ENCODE measurements at regions of chr11 and their contacts with region 1.

Region 1: GRCh38 chr11:34512840-34513681 is 533 bp downstream of the ELF5 start:
- DNase-seq: peak; percentile 74 to 81
- ATAC-seq: peak; percentile 92 to 99
- H3K4me3 ChIP-seq: no peak overlapping the region
- H3K27ac ChIP-seq: peak overlapping the region in 1 of 2 experiments; percentile 52; a peak in 3 of 6 replicates
- H3K4me1 ChIP-seq: no peaks in the 10 kb centered on the region
- CTCF ChIP-seq: peak; percentile 69
- EP300 ChIP-seq: no peak
- POLR2A ChIP-seq: no peak
- RAD21 ChIP-seq: peak; percentile 71 to 74

Region 2: GRCh38 chr11:34492806-34493414 is 20.2 kb before region 1 on chr11:
- CTCF ChIA-PET with region 1: interaction called, 89 read pairs
- POLR2A ChIA-PET with region 1: no interaction called
- DNase-seq: peak; percentile 66 to 75
- ATAC-seq: peak; percentile 51 to 81; a peak in 3 of 6 replicates
- H3K4me3 ChIP-seq: no peak overlapping the region
- H3K27ac ChIP-seq: peak overlapping the region in 1 of 2 experiments; percentile 47; a peak in 3 of 6 replicates
- H3K4me1 ChIP-seq: no peaks in the 10 kb centered on the region
- CTCF ChIP-seq: peak; percentile 90
- EP300 ChIP-seq: no peak
- POLR2A ChIP-seq: no peak
- RAD21 ChIP-seq: peak; percentile 90

Region 3: GRCh38 chr11:34525887-34526636 is 13.0 kb after region 1 on chr11:
- CTCF ChIA-PET with region 1: interaction called, 47 read pairs
- POLR2A ChIA-PET with region 1: no interaction called
- DNase-seq: no peak
- ATAC-seq: no peak
- H3K4me3 ChIP-seq: no peak overlapping the region
- H3K27ac ChIP-seq: no peak overlapping the region
- H3K4me1 ChIP-seq: 0 out of 3 replicates have a peak, but pooled peaks cover 6% of the 10 kb centered on the region
- CTCF ChIP-seq: no peak
- EP300 ChIP-seq: no peak
- POLR2A ChIP-seq: no peak
- RAD21 ChIP-seq: no peak

Region 4: GRCh38 chr11:34565417-34566207 is 52.6 kb after region 1 on chr11:
- CTCF ChIA-PET with region 1: interaction called, 10 read pairs
- POLR2A ChIA-PET with region 1: no interaction called
- DNase-seq: peak; percentile 14 to 37
- ATAC-seq: peak in 1 of 2 experiments; percentile 80; a peak in 3 of 6 replicates
- H3K4me3 ChIP-seq: no peak overlapping the region
- H3K27ac ChIP-seq: peak overlapping the region in 1 of 2 experiments; percentile 26; a peak in 1 of 6 replicates
- H3K4me1 ChIP-seq: peaks cover 11% of the 10 kb centered on the region
- CTCF ChIP-seq: peak; percentile 48
- EP300 ChIP-seq: no peak
- POLR2A ChIP-seq: no peak
- RAD21 ChIP-seq: peak; percentile 53 to 75

Region 5: DNA sequence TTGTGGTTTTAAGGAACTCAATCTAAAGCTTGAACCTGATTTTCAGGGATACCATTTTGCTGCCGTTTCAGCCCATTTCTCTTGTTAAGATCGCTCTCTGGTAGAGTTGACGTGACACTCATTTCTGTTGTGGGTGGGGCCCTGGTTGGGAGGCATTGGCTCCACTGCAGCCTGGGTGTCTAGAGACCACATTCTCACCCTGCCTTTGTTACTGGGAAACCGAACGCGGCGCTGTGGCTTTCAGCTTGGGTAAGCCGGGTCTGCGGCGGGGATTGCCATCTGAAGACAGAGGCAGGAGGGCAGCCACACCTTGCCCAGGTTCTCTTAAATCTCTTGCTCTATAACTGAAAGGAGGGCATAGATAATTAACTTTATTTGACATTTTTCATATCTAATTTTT is 111.0 kb after region 1 on chr11:
- CTCF ChIA-PET with region 1: no interaction called
- POLR2A ChIA-PET with region 1: no interaction called
- DNase-seq: no peak
- ATAC-seq: no peak
- H3K4me3 ChIP-seq: no peak overlapping the region
- H3K27ac ChIP-seq: peak overlapping the region in 1 of 2 experiments; percentile 68; a peak in 3 of 6 replicates
- H3K4me1 ChIP-seq: peaks cover 8% of the 10 kb centered on the region
- CTCF ChIP-seq: no peak
- EP300 ChIP-seq: no peak
- POLR2A ChIP-seq: no peak
- RAD21 ChIP-seq: no peak

Region 6: DNA sequence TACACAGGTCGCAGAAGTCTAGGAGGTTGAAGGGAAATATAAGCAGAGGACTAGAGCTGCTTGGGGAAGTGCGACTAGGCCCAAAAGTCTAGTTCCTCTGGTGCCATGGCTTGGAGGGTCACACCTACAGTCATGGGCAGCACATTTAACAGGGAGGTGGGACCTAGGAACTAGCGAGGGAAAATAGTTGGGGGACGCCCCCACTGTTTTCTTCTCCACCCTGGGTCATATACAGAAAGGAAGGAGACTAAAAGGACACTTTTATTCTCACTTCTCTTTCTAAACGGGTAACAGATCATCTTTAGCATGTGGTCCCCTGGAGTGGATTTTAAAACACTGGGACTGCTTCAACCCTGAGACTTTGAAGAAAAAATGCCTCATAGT is 386.6 kb after region 1 on chr11:
- CTCF ChIA-PET with region 1: interaction called, 14 read pairs
- POLR2A ChIA-PET with region 1: no interaction called
- DNase-seq: peak in 1 of 2 experiments; percentile 27
- ATAC-seq: no peak
- H3K4me3 ChIP-seq: no peak overlapping the region
- H3K27ac ChIP-seq: no peak overlapping the region
- H3K4me1 ChIP-seq: no peaks in the 10 kb centered on the region
- CTCF ChIP-seq: no peak
- EP300 ChIP-seq: no peak
- POLR2A ChIP-seq: no peak
- RAD21 ChIP-seq: no peak